Ascending aorta (tissue), 2 donors: ENCODE measurements at regions of chr15 and their contacts with region 1.

Region 1: GRCh38 chr15:35697549-35698299 is 151.8 kb upstream of the DPH6 start:
- DNase-seq: no peak
- H3K4me3 ChIP-seq: peak overlapping the region in 1 of 2 donors; percentile 7
- H3K27ac ChIP-seq: peak overlapping the region; percentile 62 to 76
- H3K4me1 ChIP-seq: peaks cover 9 to 23% of the 10 kb centered on the region in 2 donors
- H3K27me3 ChIP-seq: no peaks in the 10 kb centered on the region
- CTCF ChIP-seq: peak in 1 of 3 experiments; percentile 21

Region 2: DNA sequence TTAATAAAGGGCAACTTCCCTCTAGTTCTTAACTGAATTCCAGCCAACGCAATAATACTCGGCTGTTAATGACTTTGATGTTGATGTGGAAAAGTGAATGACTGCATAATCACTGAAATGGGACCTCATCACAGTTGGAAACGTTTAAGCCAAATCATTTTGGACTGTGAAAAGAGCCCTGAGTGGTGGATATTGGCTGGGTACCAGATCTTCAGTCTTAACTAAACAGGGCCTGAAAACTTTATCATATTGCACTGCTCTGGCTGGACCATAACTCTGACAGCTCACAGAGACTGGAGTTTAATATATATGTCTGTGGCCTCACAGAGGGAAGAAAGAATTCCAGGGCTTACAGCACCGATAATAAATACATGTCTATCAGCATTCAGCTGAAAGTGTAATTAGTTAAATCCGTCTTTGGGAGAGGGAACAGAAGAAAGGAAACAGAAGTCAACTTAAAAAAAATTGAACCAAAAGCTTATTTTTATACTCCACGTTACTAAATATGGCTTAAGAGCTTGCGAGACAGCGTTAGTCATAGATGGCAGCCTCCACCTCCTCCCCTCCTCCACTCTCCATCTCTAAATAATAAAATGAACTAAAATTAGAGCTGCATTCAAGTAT is 659.4 kb after region 1 on chr15:
- intact Hi-C with region 1: loop called (anchors 10 kb)
- DNase-seq: no peak
- H3K4me3 ChIP-seq: peak overlapping the region in 1 of 2 donors; percentile 14
- H3K27ac ChIP-seq: peak overlapping the region; percentile 84
- H3K4me1 ChIP-seq: peaks cover 8 to 18% of the 10 kb centered on the region in 2 donors
- H3K27me3 ChIP-seq: no peaks in the 10 kb centered on the region
- CTCF ChIP-seq: no peak

Region 3: DNA sequence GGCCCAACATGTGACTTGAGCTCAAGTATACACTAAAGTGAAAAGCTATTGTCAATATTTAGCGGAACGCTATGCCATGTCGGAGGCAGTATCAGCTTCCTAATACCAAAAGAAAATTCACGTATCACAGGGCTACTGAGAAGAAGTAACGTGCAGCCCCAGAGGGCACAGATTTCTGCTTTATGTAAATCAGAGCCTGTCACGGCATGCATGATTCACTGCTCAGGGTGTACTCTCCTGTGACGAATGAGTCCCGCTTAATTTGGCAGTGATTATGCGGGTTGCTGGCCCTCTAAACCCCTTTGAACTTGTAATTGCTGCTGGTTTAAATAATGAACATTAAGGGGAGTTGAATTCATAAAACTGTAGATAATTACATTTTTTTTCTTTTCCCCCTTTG is 1317.3 kb after region 1 on chr15:
- intact Hi-C with region 1: loop called (anchors 10 kb)
- DNase-seq: peak in 1 of 2 donors; percentile 71
- H3K4me3 ChIP-seq: peak overlapping the region in 1 of 2 donors; percentile 47
- H3K27ac ChIP-seq: peak overlapping the region; percentile 61 to 82
- H3K4me1 ChIP-seq: peaks cover 3 to 16% of the 10 kb centered on the region in 2 donors
- H3K27me3 ChIP-seq: no peaks in the 10 kb centered on the region
- CTCF ChIP-seq: no peak